ENCODE measurements at regions of chr12 and their contacts with region 1.

Region 1: DNA sequence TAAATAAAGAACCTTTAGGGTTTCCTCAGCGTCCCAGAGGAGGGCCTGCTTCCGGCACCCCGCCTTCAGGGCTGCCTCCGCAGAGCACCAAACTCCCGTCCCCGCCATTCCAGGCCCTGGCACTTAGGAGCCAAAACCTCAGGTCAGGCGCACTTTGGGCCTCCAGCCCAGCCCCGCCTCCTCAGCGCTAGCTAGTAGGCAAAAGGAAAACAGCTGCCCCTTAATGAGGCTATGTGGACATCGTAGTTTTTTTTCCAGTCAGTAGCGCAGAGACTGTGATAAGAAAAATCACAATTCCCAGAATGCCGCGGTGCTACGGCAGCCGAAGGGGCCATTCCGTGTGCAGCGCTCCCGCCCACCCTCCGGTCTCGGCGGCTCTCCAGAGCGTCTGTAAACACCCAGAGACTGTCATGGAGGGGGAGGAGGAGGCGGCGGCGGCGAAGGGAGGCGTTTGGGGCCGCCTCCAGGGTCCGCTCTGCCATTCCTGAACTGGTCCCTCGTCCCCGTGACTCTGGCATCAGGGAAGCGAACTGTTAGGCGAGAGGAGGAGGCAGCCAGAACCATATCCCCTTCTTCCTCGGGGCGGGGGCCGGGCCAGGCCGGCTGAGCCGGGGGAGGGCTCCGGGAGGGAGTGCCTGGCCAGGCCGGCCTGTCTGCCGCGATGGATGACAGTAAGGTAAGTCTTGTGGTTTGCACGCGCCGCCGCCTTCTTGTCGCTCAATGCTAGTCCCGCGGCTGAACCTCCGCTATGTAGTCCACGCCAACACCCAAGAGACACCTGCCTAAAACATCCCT is at the start of gene CREBL2:
- DNase-seq: peak; percentile 83 to 97
- ATAC-seq: peak; percentile 97 to 98
- H3K4me3 ChIP-seq: peak within 1 kb of the TSS; percentile 78 to 90 (median 82)
- H3K27ac ChIP-seq: peak within 1 kb of the TSS; percentile 95 to 98 (median 96)
- H3K4me1 ChIP-seq: peaks cover 18 to 24% of the 10 kb centered on the region in 2 donors
- H3K27me3 ChIP-seq: no peaks in the 10 kb centered on the region
- CTCF ChIP-seq: peak in 1 of 5 experiments; percentile 27
- POLR2A ChIP-seq: peak; percentile 61 to 80
- total RNA-seq, gene CREBL2: 6.3 to 13.6 (median 10.3) TPM

Region 2: DNA sequence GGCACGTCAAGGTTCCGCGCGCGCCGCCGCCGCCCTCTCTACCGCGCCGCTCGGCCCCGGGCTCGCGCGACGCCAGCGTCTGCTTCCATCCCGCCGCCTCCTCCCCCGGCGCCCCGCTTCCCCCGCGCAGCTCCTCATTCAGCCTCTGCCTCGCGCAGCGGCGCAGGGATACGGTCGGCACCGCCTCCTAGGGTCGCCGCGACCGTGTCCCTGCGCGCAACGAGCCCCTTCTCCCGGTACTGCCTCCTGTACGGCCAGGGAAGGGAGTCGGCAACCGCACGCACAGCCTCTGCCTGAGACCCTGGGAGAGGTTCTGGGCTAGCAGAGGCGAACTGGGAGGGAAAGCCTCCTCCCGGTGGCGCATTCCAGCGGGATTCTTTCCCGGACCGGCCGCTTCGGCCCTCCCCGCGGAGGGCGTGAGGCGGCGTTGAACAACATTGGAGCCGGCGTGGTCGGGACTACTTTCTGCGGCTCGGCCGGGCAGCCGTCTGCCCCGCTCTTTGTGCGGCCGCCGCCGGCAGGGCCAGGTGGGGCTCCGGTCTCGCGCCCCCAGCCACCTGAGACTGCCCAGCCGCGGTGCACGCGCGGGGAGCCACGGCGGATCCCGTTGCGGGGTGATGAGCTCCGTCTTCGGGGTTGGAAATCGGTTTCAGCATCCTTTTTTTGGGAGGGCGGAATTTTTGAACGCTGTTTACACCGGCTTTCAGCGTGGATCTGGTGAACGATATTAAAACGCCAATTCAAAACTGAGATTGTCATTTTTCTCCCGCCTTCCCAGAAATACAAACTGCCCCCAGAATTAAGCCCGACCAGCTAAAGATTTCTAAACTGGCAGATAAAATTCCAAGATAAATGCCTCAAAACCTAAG is 344.6 kb before region 1 on chr12 and contains the start of gene LRP6:
- in situ Hi-C with region 1: no loop called
- intact Hi-C with region 1: loop called (anchors 5 kb)
- DNase-seq: peak; percentile 76 to 84
- ATAC-seq: peak; percentile 93 to 94
- H3K4me3 ChIP-seq: peak within 1 kb of the TSS; percentile 76 to 96 (median 86)
- H3K27ac ChIP-seq: peak within 1 kb of the TSS; percentile 90 to 99 (median 98)
- H3K4me1 ChIP-seq: peaks cover 18 to 21% of the 10 kb centered on the region in 2 donors
- H3K27me3 ChIP-seq: no peaks in the 10 kb centered on the region
- CTCF ChIP-seq: peak in 3 of 5 experiments; percentile 21 to 37 (median 32)
- POLR2A ChIP-seq: peak; percentile 68 to 81
- total RNA-seq, gene LRP6: 9.5 to 21.4 (median 14.7) TPM

Region 3: DNA sequence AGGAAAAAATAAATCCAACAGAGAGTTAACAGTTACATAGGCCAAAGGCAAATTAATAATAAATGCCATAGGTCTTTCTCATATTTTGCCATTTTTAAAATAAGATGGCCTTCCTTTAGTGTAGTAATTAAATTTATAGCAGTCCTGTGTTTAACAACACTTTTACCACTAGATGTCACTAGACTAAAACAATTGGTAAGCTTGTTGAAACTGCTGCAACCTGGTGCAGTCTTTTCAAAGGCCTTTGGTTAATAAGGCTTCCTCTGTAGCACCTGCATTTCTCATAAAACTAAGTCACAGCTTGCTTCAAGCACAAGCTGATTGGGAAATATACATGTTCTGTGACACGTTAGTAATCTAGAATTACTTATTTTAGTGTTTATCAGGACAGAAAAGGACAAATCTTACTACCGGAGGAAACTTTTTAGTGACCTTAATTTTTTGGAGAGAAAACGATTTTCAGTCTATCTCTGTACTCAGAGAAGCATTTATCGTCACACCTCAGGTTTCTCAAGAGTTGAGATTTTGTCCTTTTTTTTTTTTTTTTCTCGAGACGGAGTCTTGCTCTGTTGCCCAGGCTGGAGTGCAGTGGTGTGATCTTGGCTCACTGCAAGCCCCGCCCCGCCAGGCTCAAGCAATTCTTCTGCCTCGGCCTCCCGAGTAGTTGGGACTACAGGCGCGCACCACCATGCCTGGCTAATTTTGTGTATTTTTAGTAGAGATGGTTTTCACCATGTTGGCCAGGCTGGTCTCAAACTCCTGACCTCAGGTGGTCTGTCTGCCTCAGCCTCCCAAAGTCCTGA is 234.9 kb before region 1 on chr12:
- in situ Hi-C with region 1: no loop called
- intact Hi-C with region 1: loop called (anchors 2 kb)
- DNase-seq: no peak
- ATAC-seq: peak; percentile 83 to 98
- H3K4me3 ChIP-seq: no peak overlapping the region
- H3K27ac ChIP-seq: no peak overlapping the region
- H3K4me1 ChIP-seq: peaks cover 0 to 12% of the 10 kb centered on the region in 2 donors
- H3K27me3 ChIP-seq: no peaks in the 10 kb centered on the region
- CTCF ChIP-seq: peak; percentile 65 to 86 (median 71)
- POLR2A ChIP-seq: no peak

Region 4: GRCh38 chr12:12415886-12416285 is 195.8 kb before region 1 on chr12:
- in situ Hi-C with region 1: no loop called
- intact Hi-C with region 1: no loop called
- DNase-seq: no peak
- ATAC-seq: no peak
- H3K4me3 ChIP-seq: no peak overlapping the region
- H3K27ac ChIP-seq: no peak overlapping the region
- H3K4me1 ChIP-seq: no peaks in the 10 kb centered on the region
- H3K27me3 ChIP-seq: no peaks in the 10 kb centered on the region
- CTCF ChIP-seq: no peak
- POLR2A ChIP-seq: no peak

Region 5: GRCh38 chr12:12645485-12645884 is 33.8 kb after region 1 on chr12:
- in situ Hi-C with region 1: no loop called
- intact Hi-C with region 1: no loop called
- DNase-seq: no peak
- ATAC-seq: peak in 1 of 2 donors; percentile 41
- H3K4me3 ChIP-seq: no peak overlapping the region
- H3K27ac ChIP-seq: no peak overlapping the region
- H3K4me1 ChIP-seq: no peaks in the 10 kb centered on the region
- H3K27me3 ChIP-seq: no peaks in the 10 kb centered on the region
- CTCF ChIP-seq: peak in 4 of 5 experiments; percentile 19 to 51 (median 32)
- POLR2A ChIP-seq: no peak

Region 6: DNA sequence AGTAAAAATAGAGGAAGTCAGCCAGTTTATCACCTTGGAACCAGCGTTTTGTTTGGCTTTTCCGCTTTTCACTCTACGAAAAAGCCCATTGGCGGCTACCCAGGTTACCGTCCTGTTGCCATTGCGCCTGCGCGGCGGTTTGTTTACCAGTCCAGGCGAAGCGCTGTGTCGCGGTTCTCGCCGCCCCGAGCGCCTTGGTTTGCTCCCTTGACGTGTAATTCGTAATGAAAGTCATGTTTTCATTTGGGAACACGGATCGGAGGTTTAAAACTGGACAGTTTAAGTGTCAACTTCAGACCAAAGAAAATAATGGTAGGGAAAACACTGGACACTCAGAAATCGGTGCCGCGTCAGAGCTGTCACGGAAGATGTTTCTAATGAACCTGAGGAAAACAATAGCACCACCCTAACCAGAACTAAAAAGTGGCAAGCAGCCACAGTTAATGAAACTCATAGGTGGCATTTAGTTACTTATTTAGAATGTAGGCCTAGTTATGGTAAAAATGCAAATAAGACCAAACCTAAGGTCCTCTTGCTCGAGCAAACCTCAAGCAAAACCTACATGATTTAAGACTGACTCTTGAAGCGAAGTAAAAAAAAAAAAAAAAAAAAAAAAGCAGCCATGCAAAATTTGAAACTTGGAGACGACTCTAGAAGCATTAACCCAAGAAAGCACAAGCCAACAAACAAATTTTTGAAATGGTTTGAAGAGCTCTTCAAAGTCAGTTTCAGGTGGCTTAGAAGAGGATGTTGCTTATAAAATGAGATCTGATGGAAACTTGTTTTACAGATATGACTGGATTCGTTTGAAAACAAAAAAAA is 85.1 kb after region 1 on chr12:
- in situ Hi-C with region 1: loop called in 1 of 4 experiments (anchors 10 kb)
- intact Hi-C with region 1: loop called (anchors 2 kb)
- DNase-seq: peak; percentile 81 to 86
- ATAC-seq: peak; percentile 93
- H3K4me3 ChIP-seq: peak overlapping the region; percentile 60 to 81 (median 76)
- H3K27ac ChIP-seq: peak overlapping the region; percentile 87 to 98 (median 97)
- H3K4me1 ChIP-seq: peaks cover 5 to 6% of the 10 kb centered on the region in 2 donors
- H3K27me3 ChIP-seq: no peaks in the 10 kb centered on the region
- CTCF ChIP-seq: no peak
- POLR2A ChIP-seq: peak; percentile 65 to 81

Region 7: DNA sequence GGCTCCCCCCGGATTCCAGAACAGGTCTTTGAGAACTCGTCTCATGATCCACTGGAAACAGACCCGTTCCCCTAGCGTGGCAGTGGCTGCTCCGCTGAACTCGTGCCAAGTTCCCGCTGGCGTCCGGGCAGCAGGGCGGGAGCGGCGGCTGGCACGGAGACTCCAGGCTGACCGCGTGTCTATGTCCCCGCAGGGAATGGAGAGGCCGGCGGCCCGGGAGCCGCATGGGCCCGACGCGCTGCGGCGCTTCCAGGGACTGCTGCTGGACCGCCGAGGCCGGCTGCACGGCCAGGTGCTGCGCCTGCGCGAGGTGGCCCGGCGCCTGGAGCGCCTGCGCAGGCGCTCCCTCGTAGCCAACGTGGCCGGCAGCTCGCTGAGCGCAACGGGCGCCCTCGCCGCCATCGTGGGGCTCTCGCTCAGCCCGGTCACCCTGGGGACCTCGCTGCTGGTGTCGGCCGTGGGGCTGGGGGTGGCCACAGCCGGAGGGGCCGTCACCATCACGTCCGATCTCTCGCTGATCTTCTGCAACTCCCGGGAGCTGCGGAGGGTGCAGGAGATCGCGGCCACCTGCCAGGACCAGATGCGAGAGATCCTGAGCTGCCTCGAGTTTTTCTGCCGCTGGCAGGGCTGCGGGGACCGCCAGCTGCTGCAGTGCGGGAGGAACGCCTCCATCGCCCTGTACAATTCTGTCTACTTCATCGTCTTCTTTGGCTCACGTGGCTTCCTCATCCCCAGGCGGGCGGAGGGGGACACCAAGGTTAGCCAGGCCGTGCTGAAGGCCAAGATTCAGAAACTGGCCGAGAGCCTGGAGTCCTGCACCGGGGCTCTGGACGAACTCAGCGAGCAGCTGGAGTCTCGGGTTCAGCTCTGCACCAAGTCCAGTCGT is 175.2 kb after region 1 on chr12:
- in situ Hi-C with region 1: no loop called
- intact Hi-C with region 1: loop called (anchors 2 kb)
- DNase-seq: peak; percentile 51 to 73
- ATAC-seq: peak; percentile 72 to 74
- H3K4me3 ChIP-seq: peak overlapping the region; percentile 70 to 87 (median 80)
- H3K27ac ChIP-seq: peak overlapping the region; percentile 87 to 94 (median 92)
- H3K4me1 ChIP-seq: peaks cover 12 to 30% of the 10 kb centered on the region in 2 donors
- H3K27me3 ChIP-seq: no peaks in the 10 kb centered on the region
- CTCF ChIP-seq: peak; percentile 20 to 42 (median 32)
- POLR2A ChIP-seq: peak; percentile 59 to 71

Region 8: GRCh38 chr12:12813120-12814101 is 201.7 kb after region 1 on chr12 and contains the start of gene DDX47:
- in situ Hi-C with region 1: no loop called
- intact Hi-C with region 1: no loop called
- DNase-seq: peak; percentile 91 to 93
- ATAC-seq: peak; percentile 92 to 96
- H3K4me3 ChIP-seq: peak within 1 kb of the TSS; percentile 82 to 99 (median 93)
- H3K27ac ChIP-seq: peak within 1 kb of the TSS; percentile 78 to 88 (median 82)
- H3K4me1 ChIP-seq: peaks cover 24 to 38% of the 10 kb centered on the region in 2 donors
- H3K27me3 ChIP-seq: no peaks in the 10 kb centered on the region
- CTCF ChIP-seq: peak; percentile 95 to 99 (median 97)
- POLR2A ChIP-seq: peak in 1 of 2 donors; percentile 15
- total RNA-seq, gene DDX47: 37.1 to 75.4 (median 58.3) TPM

Measured in gastrocnemius medialis (tissue), 4 donors.